Breast epithelium (tissue), 4 donors: ENCODE measurements at regions of chr5 and their contacts with region 1.

Region 1: GRCh38 chr5:32419791-32420190 is 24.7 kb downstream of the ZFR start:
- DNase-seq: no peak
- H3K4me3 ChIP-seq: no peak overlapping the region
- H3K27ac ChIP-seq: no peak overlapping the region
- H3K4me1 ChIP-seq: peaks cover 0 to 7% of the 10 kb centered on the region in 2 donors
- H3K27me3 ChIP-seq: no peaks in the 10 kb centered on the region
- CTCF ChIP-seq: no peak
- POLR2A ChIP-seq: no peak

Region 2: GRCh38 chr5:31825518-31826068 is 594.2 kb before region 1 on chr5:
- intact Hi-C with region 1: loop called (anchors 5 kb)
- DNase-seq: peak in 1 of 2 donors; percentile 34
- H3K4me3 ChIP-seq: no peak overlapping the region
- H3K27ac ChIP-seq: no peak overlapping the region
- H3K4me1 ChIP-seq: no peaks in the 10 kb centered on the region
- H3K27me3 ChIP-seq: no peaks in the 10 kb centered on the region
- CTCF ChIP-seq: peak in 2 of 3 donors; percentile 63 to 65
- POLR2A ChIP-seq: no peak

Region 3: DNA sequence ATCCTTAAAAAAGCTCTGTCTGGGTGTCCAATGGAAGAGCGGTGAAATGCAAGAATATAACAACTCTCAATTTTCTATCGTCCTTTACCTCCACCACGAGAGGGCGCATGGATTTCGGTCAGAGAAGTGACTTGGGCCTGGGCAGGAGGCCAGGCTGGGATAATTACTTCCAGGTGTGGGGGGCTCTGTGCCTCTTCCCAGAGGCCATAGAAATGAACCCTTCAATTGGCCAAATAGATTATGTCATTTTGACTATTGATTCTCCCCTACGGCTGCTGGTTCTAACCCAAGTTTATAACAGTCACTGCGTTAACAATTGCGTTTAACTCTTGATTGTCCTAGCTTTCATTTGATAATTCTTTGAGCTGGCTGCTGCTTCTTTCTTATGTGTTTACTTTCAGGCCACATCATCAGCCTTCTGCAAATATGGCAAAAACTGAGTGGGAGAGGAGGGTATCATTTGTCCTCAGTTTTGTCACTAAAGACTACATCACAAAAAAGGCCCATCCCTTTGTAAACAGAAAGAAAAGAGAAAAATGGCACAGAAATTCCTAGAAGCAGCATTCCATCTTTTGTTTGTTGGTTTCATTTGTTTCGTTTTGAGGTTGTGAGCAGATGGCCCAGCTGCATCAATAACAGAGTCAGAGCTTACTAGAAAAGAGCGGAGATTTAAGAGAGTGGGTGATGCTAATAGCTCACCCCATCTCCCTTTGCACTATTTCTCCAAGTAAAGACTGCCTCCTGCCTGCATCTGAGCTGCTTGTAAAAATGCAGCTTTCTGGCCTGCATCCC is 70.2 kb after region 1 on chr5:
- intact Hi-C with region 1: no loop called
- DNase-seq: peak; percentile 40 to 74
- H3K4me3 ChIP-seq: no peak overlapping the region
- H3K27ac ChIP-seq: peak overlapping the region in 1 of 2 donors; percentile 4
- H3K4me1 ChIP-seq: no peaks in the 10 kb centered on the region
- H3K27me3 ChIP-seq: no peaks in the 10 kb centered on the region
- CTCF ChIP-seq: peak; percentile 59 to 78 (median 72)
- POLR2A ChIP-seq: no peak